Activated B cell treated with CpG ODN at 0.5 μM for 24 hours (primary cell): ENCODE measurements at regions of chr12 and their contacts with region 1.

Region 1: GRCh38 chr12:6965026-6965661 is 5.3 kb downstream of the PHB2 start:
- DNase-seq: peak; percentile 76
- ATAC-seq: peak; percentile 64
- H3K4me3 Mint-ChIP-seq: peak overlapping the region; percentile 11
- H3K27ac Mint-ChIP-seq: peak overlapping the region; percentile 86
- H3K4me1 Mint-ChIP-seq: peaks cover 69% of the 10 kb centered on the region
- H3K27me3 Mint-ChIP-seq: no peaks in the 10 kb centered on the region
- CTCF ChIP-seq: no peak

Region 2: GRCh38 chr12:6154730-6155459 is 810.2 kb before region 1 on chr12:
- CTCF ChIA-PET with region 1: no interaction called
- POLR2A ChIA-PET with region 1: no interaction called
- intact Hi-C with region 1: no loop called
- DNase-seq: no peak
- ATAC-seq: no peak
- H3K4me3 Mint-ChIP-seq: no peak overlapping the region
- H3K27ac Mint-ChIP-seq: no peak overlapping the region
- H3K4me1 Mint-ChIP-seq: no peaks in the 10 kb centered on the region
- H3K27me3 Mint-ChIP-seq: peaks cover 15% of the 10 kb centered on the region
- CTCF ChIP-seq: no peak

Region 3: GRCh38 chr12:6867413-6868210 is 97.5 kb before region 1 on chr12 and contains the start of gene TPI1:
- CTCF ChIA-PET with region 1: interaction called, 22 read pairs
- POLR2A ChIA-PET with region 1: interaction called, 41 read pairs
- intact Hi-C with region 1: loop called (anchors 1 kb)
- DNase-seq: peak; percentile 65
- ATAC-seq: peak; percentile 78
- H3K4me3 Mint-ChIP-seq: peak within 1 kb of the TSS; percentile 89
- H3K27ac Mint-ChIP-seq: peak within 1 kb of the TSS; percentile 84
- H3K4me1 Mint-ChIP-seq: peaks cover 51% of the 10 kb centered on the region
- H3K27me3 Mint-ChIP-seq: no peaks in the 10 kb centered on the region
- CTCF ChIP-seq: no peak
- total RNA-seq, gene TPI1: 306 and 318 TPM in 2 replicates

Region 4: GRCh38 chr12:6921996-6922946 is 42.9 kb before region 1 on chr12:
- CTCF ChIA-PET with region 1: interaction called, 20 read pairs
- POLR2A ChIA-PET with region 1: interaction called, 4 read pairs
- intact Hi-C with region 1: loop called (anchors 1 kb)
- DNase-seq: no peak
- ATAC-seq: peak; percentile 49
- H3K4me3 Mint-ChIP-seq: peak overlapping the region; percentile 9
- H3K27ac Mint-ChIP-seq: peak overlapping the region; percentile 78
- H3K4me1 Mint-ChIP-seq: peaks cover 50% of the 10 kb centered on the region
- H3K27me3 Mint-ChIP-seq: no peaks in the 10 kb centered on the region
- CTCF ChIP-seq: no peak

Region 5: GRCh38 chr12:6937481-6938297 is 27.5 kb before region 1 on chr12:
- CTCF ChIA-PET with region 1: interaction called, 571 read pairs
- POLR2A ChIA-PET with region 1: interaction called, 1,516 read pairs
- intact Hi-C with region 1: no loop called
- DNase-seq: peak; percentile 84
- ATAC-seq: peak; percentile 92
- H3K4me3 Mint-ChIP-seq: peak overlapping the region; percentile 84
- H3K27ac Mint-ChIP-seq: peak overlapping the region; percentile 91
- H3K4me1 Mint-ChIP-seq: peaks cover 35% of the 10 kb centered on the region
- H3K27me3 Mint-ChIP-seq: no peaks in the 10 kb centered on the region
- CTCF ChIP-seq: no peak

Region 6: DNA sequence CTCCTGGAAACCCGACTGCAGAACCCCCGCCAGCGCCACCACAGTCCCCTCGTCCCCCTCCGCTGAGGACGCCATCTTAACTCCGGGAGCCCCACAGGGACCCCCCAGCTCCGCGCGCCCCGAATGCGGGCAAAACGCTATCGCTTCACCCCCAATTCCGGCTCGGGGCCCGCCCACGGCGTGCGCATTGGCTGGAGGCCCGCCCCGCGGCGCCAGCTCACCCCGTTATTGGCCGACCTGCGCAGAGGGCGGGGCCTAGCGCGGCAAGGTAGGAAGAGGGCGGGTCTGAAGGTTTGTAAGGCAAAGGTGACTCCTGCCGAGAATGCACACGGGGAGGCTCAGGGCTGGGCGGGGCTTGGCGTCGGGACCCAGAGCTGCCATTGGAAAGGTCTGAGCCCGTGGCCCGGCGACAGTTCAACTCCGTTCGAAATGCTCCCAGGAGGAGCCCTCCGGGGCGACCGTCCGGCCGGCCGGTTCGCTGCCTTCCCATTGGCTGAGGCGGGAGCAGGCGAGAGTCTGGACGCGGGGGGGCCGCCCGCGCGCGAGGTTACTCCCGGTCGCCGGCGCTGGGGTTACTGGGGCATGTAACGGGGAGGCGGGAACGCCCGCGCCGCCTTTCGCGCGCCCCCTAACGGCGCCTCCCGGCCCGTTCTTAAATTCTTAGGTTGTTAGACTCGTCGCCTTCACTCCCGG is 53.4 kb after region 1 on chr12 and contains the start of gene LPCAT3:
- CTCF ChIA-PET with region 1: interaction called, 5 read pairs
- POLR2A ChIA-PET with region 1: interaction called, 3 read pairs
- intact Hi-C with region 1: loop called (anchors 1 kb)
- DNase-seq: peak; percentile 94
- ATAC-seq: peak; percentile 96
- H3K4me3 Mint-ChIP-seq: peak within 1 kb of the TSS; percentile 87
- H3K27ac Mint-ChIP-seq: peak within 1 kb of the TSS; percentile 77
- H3K4me1 Mint-ChIP-seq: peaks cover 20% of the 10 kb centered on the region
- H3K27me3 Mint-ChIP-seq: no peaks in the 10 kb centered on the region
- CTCF ChIP-seq: no peak
- total RNA-seq, gene LPCAT3: 19.3 and 21.3 TPM in 2 replicates

Region 7: DNA sequence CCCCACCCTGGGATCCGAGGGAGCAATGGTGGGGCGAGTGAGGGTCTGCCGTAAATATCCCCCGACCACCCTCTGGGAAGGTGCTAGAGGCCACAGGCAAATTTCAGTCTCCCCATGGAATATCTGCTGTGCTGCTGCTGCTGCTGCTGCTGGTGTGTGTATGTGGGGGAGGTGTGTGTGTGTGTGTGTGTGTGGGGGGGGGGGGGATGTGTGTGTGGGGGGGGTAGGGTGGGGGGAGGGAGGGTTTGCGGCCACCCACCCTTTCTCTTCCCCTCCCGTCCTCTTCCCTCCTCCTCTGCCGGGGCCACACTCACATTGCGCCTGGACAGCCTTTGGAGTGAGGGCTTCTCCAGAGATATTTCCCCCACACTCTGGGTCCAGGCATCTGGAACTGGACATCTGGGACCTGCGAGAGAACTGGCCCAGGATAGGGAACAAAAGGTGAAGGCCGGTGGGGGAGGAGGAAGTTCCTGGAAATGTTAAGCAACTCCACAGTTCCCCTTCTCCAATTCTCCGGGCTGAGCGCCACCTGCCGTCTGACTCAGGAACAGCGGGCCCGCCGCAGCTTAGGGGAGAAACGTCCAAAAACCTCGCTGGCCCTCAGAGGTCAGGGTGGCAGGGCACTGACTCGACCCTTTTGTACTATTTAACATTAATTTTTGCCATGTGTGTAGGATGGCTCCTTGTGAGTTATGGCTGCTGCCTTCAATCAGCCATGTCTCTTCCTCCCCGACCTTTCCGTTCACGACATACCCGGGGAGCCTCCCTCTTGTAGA is 143.8 kb after region 1 on chr12 and contains the start of gene C1RL:
- CTCF ChIA-PET with region 1: interaction called, 5 read pairs
- POLR2A ChIA-PET with region 1: interaction called, 7 read pairs
- intact Hi-C with region 1: loop called (anchors 1 kb)
- DNase-seq: peak; percentile 83
- ATAC-seq: peak; percentile 53
- H3K4me3 Mint-ChIP-seq: peak within 1 kb of the TSS; percentile 92
- H3K27ac Mint-ChIP-seq: peak within 1 kb of the TSS; percentile 94
- H3K4me1 Mint-ChIP-seq: peaks cover 29% of the 10 kb centered on the region
- H3K27me3 Mint-ChIP-seq: no peaks in the 10 kb centered on the region
- CTCF ChIP-seq: peak; percentile 58
- total RNA-seq, gene C1RL: 13.5 and 19.2 TPM in 2 replicates